Activated CD4-positive, alpha-beta memory T cell treated with anti-CD3 and anti-CD28 coated beads, Interleukin-2, amount 10 ng/mL, durations not matched to agents 7 days and 5 days (primary cell): ENCODE measurements at regions of chr21 and their contacts with region 1.

Region 1: GRCh38 chr21:34351786-34352241 is 12.0 kb upstream of the KCNE2 start:
- DNase-seq: peak; percentile 37
- H3K4me3 Mint-ChIP-seq: no peak overlapping the region
- H3K27ac Mint-ChIP-seq: no peak overlapping the region
- H3K4me1 Mint-ChIP-seq: peaks cover 4% of the 10 kb centered on the region
- H3K27me3 Mint-ChIP-seq: peaks cover 21% of the 10 kb centered on the region

Region 2: GRCh38 chr21:33998402-33998801 is 353.4 kb before region 1 on chr21:
- CTCF ChIA-PET with region 1: interaction called, 12 read pairs
- POLR2A ChIA-PET with region 1: no interaction called
- DNase-seq: no peak
- H3K4me3 Mint-ChIP-seq: no peak overlapping the region
- H3K27ac Mint-ChIP-seq: peak overlapping the region; percentile 40
- H3K4me1 Mint-ChIP-seq: peaks cover 25% of the 10 kb centered on the region
- H3K27me3 Mint-ChIP-seq: no peaks in the 10 kb centered on the region

Region 3: GRCh38 chr21:34129039-34129891 is 222.5 kb before region 1 on chr21:
- CTCF ChIA-PET with region 1: interaction called, 10 read pairs
- POLR2A ChIA-PET with region 1: no interaction called
- DNase-seq: peak; percentile 56
- H3K4me3 Mint-ChIP-seq: no peak overlapping the region
- H3K27ac Mint-ChIP-seq: peak overlapping the region; percentile 48
- H3K4me1 Mint-ChIP-seq: peaks cover 50% of the 10 kb centered on the region
- H3K27me3 Mint-ChIP-seq: no peaks in the 10 kb centered on the region

Region 4: GRCh38 chr21:34262469-34262845 is 89.4 kb before region 1 on chr21:
- CTCF ChIA-PET with region 1: no interaction called
- POLR2A ChIA-PET with region 1: no interaction called
- DNase-seq: no peak
- H3K4me3 Mint-ChIP-seq: no peak overlapping the region
- H3K27ac Mint-ChIP-seq: no peak overlapping the region
- H3K4me1 Mint-ChIP-seq: no peaks in the 10 kb centered on the region
- H3K27me3 Mint-ChIP-seq: peaks cover 3% of the 10 kb centered on the region

Region 5: DNA sequence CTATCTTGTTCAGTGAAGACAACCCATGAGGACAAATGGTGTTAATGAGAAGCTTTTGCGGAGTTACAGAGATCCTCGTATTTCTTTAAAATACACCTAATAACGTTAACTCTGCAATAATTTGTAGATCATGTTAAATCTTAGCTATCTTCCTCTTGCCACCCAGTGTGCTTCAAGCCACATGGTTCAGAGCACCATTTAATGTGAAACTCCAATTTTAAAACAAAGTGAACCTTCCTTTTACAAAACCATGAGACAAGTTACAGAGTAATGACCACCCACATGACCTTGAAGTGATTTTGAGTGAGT is 10.3 kb after region 1 on chr21:
- CTCF ChIA-PET with region 1: interaction called, 16 read pairs
- POLR2A ChIA-PET with region 1: no interaction called
- DNase-seq: no peak
- H3K4me3 Mint-ChIP-seq: no peak overlapping the region
- H3K27ac Mint-ChIP-seq: no peak overlapping the region
- H3K4me1 Mint-ChIP-seq: peaks cover 6% of the 10 kb centered on the region
- H3K27me3 Mint-ChIP-seq: peaks cover 22% of the 10 kb centered on the region